Psoas muscle (tissue), 8 donors: ENCODE measurements at regions of chr10 and their contacts with region 1.

Region 1: DNA sequence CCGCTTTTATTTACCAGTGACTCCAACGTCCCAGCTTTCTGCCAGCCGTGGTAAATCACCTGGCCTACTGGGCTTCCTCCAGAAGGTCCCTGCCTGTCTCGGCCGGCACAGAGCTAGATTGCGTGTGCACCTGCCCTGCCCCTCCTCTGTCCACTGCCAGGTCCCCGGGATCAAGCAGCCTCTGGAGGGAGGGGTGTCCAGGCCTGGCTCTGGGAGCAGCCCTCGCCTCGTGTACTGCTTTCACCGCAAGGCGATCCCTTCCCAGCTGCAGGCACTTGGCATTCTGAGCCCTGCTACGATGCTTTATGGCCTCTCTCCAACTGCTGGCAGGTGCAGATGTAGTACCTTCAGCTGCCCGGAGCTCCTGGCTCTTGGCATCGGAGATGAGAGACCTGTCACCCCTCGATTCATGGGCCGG is 7.4 kb downstream of the SLC29A3 start:
- DNase-seq: no peak
- ATAC-seq: peak; percentile 57 to 87 (median 79)
- H3K4me3 ChIP-seq: no peak overlapping the region
- H3K27ac ChIP-seq: no peak overlapping the region
- H3K4me1 ChIP-seq: peaks cover 4% of the 10 kb centered on the region
- H3K27me3 ChIP-seq: no peaks in the 10 kb centered on the region
- CTCF ChIP-seq: no peak

Region 2: GRCh38 chr10:71371750-71372166 is 45.3 kb after region 1 on chr10:
- intact Hi-C with region 1: loop called in 1 of 2 experiments (anchors 5 kb)
- DNase-seq: no peak
- ATAC-seq: no peak
- H3K4me3 ChIP-seq: no peak overlapping the region
- H3K27ac ChIP-seq: no peak overlapping the region
- H3K4me1 ChIP-seq: peaks cover 2% of the 10 kb centered on the region
- H3K27me3 ChIP-seq: no peaks in the 10 kb centered on the region
- CTCF ChIP-seq: no peak

Region 3: GRCh38 chr10:71419750-71420149 is 93.3 kb after region 1 on chr10:
- intact Hi-C with region 1: no loop called
- DNase-seq: no peak
- ATAC-seq: no peak
- H3K4me3 ChIP-seq: no peak overlapping the region
- H3K27ac ChIP-seq: no peak overlapping the region
- H3K4me1 ChIP-seq: no peaks in the 10 kb centered on the region
- H3K27me3 ChIP-seq: peaks cover 0 to 9% (median 0%) of the 10 kb centered on the region in 3 donors
- CTCF ChIP-seq: no peak